ENCODE measurements at regions of chr12 and their contacts with region 1.

Region 1: DNA sequence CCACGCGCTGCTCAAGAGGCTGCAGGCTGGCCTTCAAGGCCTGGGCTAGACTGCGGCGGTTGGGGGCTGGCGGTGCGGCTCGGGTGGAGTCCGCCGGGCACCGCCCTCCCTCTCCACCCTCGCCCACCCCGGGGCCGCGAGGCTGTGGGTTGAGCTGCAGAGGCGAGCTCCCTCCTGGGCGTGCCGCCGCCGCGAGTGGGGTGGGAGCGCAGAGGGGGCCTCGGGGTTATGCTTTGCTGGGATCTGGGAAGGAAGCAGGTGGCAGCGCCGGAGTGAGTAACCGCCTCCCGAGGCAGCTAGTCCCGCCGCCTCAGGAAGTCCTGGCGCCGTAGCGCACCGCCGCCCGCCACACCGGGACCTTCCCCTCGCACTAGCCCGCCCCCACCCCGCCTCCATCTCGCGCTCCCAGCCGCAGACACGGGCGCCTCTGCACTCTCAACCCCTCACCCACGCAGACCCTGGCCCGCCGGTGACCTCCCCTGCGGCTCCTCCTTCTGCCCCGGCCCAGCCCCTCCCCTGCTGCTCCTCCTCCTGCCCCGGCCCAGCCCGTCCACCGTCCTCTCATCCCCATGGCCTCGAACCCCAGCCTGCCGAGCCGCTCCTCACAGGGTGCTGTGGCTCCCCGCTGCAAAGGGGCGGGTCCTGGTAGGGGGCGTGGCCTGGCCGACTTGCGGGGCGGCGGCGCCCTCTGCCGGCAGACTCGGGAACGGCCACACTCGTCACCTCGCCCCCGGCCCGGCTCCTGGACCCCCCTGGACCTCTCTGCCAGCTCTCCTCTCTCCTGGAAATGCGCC is 16.6 kb downstream of the TAMALIN start:
- DNase-seq: peak; percentile 92
- CTCF ChIP-seq: peak; percentile 89

Region 2: GRCh38 chr12:51846911-51847642 is 176.3 kb before region 1 on chr12:
- CTCF ChIA-PET with region 1: no interaction called
- POLR2A ChIA-PET with region 1: no interaction called
- DNase-seq: no peak
- CTCF ChIP-seq: no peak

Region 3: GRCh38 chr12:51970904-51971646 is 52.3 kb before region 1 on chr12:
- CTCF ChIA-PET with region 1: interaction called, 28 read pairs
- POLR2A ChIA-PET with region 1: no interaction called
- DNase-seq: peak; percentile 71
- CTCF ChIP-seq: peak; percentile 62

Region 4: GRCh38 chr12:52041695-52042123 is 18.3 kb after region 1 on chr12:
- CTCF ChIA-PET with region 1: interaction called, 172 read pairs
- POLR2A ChIA-PET with region 1: no interaction called
- DNase-seq: peak; percentile 65
- CTCF ChIP-seq: peak; percentile 34

Region 5: DNA sequence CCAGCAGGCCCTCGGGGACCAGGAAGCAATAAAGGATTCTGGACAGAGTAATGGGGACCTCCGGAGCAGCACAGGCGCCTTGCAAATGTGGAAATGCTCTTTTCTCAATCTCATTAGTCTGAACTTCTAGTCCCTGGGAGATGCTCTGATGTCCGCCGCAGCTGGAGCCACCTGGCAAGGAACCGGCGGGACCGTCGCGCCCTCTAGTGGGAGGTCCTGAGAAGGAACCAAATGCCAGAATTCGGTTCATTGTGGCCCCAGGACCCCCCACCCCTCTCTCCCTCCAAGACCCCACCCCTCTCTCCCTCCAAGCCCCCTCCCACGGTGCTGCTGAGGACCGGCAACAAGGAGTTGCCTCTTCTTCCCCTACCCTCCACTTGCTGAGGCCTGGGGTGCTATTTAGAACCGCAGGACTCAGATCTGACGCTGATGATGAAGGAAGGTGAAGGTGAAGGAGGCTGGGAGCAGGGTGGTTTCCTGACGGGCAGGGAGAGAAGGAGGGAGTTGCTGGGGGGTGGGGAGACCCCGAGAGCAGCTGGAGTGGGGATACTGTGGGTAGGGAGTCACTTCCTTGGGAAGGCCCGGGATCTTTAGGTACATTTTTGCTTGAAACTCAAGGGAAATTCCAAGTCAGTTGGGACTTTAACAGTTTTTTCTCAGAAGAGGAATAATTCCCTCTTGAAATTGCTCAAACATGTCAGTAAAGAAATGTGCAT is 98.6 kb after region 1 on chr12:
- CTCF ChIA-PET with region 1: interaction called, 186 read pairs
- POLR2A ChIA-PET with region 1: no interaction called
- DNase-seq: peak; percentile 81
- CTCF ChIP-seq: peak; percentile 81

Region 6: GRCh38 chr12:52521175-52521567 is 497.8 kb after region 1 on chr12:
- CTCF ChIA-PET with region 1: no interaction called
- POLR2A ChIA-PET with region 1: interaction called, 10 read pairs
- DNase-seq: no peak
- CTCF ChIP-seq: no peak

Measured in GM10248 (cell line).